ENCODE measurements at regions of chr2 and their contacts with region 1.

Region 1: DNA sequence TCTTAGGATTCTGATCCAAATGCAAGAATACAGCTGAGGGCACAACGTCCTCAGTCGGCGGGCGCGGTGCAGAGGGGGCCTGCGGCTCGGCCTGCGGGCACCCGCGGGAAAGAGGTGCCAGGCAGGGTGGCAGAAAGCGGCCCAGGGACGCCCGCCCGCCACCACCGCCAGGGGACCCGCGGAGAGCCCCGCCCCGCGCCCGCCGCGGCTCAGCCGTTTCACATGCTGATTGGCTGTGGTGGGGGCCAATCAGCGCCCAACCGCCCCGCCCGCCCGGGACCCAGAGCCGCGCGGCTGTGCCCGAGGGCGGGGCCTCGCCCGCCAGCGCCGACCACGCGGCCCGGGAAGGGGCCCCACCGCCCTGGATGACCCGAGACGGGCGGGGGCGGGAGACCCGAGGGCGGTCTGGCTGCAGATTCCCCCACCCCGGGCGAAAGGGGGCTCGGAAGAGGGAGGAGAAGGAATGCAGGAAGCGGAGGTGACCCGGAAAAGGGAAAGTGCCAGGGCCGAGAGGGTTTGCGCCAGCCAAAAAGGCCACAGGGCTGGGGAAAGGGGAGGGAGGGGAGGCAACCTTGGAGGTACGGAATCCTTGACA is 8.0 kb downstream of the IRS1 start:
- DNase-seq: peak; percentile 82
- H3K4me3 ChIP-seq: peak overlapping the region; percentile 82 to 92 (median 85)
- H3K27ac ChIP-seq: peak overlapping the region; percentile 87
- H3K4me1 ChIP-seq: peaks cover 32% of the 10 kb centered on the region
- H3K27me3 ChIP-seq: no peaks in the 10 kb centered on the region
- CTCF ChIP-seq: peak in 1 of 2 donors; percentile 31

Region 2: GRCh38 chr2:225889446-225889850 is 902.1 kb before region 1 on chr2:
- CTCF ChIA-PET with region 1: no interaction called
- dilution Hi-C with region 1: no loop called
- in situ Hi-C with region 1: loop called (anchors 5 to 25 kb)
- intact Hi-C with region 1: no loop called
- DNase-seq: peak; percentile 73
- H3K4me3 ChIP-seq: no peak overlapping the region
- H3K27ac ChIP-seq: peak overlapping the region; percentile 45
- H3K4me1 ChIP-seq: peaks cover 4% of the 10 kb centered on the region
- H3K27me3 ChIP-seq: no peaks in the 10 kb centered on the region
- CTCF ChIP-seq: peak; percentile 60 to 80

Region 3: GRCh38 chr2:226137201-226137811 is 654.3 kb before region 1 on chr2:
- CTCF ChIA-PET with region 1: no interaction called
- dilution Hi-C with region 1: no loop called
- in situ Hi-C with region 1: loop called in 1 of 2 experiments (anchors 10 kb)
- intact Hi-C with region 1: loop called (anchors 5 kb)
- DNase-seq: peak; percentile 99
- H3K4me3 ChIP-seq: peak overlapping the region in 2 of 3 experiments; percentile 6 to 16
- H3K27ac ChIP-seq: peak overlapping the region; percentile 95
- H3K4me1 ChIP-seq: peaks cover 14% of the 10 kb centered on the region
- H3K27me3 ChIP-seq: no peaks in the 10 kb centered on the region
- CTCF ChIP-seq: no peak

Region 4: GRCh38 chr2:226447338-226448295 is 344.0 kb before region 1 on chr2:
- CTCF ChIA-PET with region 1: interaction called, 3 read pairs
- dilution Hi-C with region 1: no loop called
- in situ Hi-C with region 1: no loop called
- intact Hi-C with region 1: loop called (anchors 1 kb)
- DNase-seq: peak; percentile 93
- H3K4me3 ChIP-seq: no peak overlapping the region
- H3K27ac ChIP-seq: peak overlapping the region; percentile 75
- H3K4me1 ChIP-seq: peaks cover 17% of the 10 kb centered on the region
- H3K27me3 ChIP-seq: no peaks in the 10 kb centered on the region
- CTCF ChIP-seq: no peak

Region 5: DNA sequence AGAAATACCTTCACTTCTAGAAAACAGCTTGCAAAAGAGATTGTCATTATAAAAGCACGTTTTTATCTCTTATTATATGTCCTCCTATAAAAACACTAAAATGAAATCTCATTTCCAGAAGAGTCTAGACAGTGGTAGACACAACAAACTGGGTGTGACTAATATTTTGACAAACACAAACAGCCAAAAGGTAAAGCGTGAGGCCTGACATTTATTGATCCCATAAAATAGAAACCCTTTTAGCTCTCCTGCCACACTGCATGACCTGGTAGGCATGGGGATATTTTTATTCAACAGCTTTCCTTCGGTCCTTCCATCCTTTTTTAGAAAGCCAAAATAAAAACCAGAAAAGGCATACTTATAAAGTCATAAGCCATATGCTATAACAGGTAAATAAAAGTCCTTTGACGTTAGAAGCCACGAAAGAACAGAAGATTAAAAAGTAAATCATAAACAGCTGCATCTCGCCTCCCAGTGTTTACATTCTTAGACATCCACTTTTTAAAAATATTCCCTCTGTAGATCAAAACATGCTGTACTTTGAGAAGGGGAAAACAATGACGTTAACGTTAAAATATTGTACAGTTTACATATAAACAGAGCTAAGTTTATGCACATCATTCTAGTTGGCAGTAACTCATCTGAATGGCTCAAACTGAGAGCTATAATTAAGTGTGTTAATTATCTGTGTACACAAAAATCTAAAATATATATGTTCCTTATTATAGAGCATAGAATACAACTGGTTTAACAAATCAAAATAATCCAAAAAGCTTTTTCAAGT is 36.6 kb before region 1 on chr2:
- CTCF ChIA-PET with region 1: no interaction called
- dilution Hi-C with region 1: no loop called
- in situ Hi-C with region 1: no loop called
- intact Hi-C with region 1: loop called (anchors 1 kb)
- DNase-seq: no peak
- H3K4me3 ChIP-seq: no peak overlapping the region
- H3K27ac ChIP-seq: peak overlapping the region; percentile 97
- H3K4me1 ChIP-seq: peaks cover 35% of the 10 kb centered on the region
- H3K27me3 ChIP-seq: no peaks in the 10 kb centered on the region
- CTCF ChIP-seq: no peak

Measured in mammary epithelial cell (primary cell).